ENCODE measurements at regions of chr1 and their contacts with region 1.

Region 1: GRCh38 chr1:39653546-39654031 is 14.1 kb upstream of the HEYL start:
- DNase-seq: peak; percentile 41 to 75
- ATAC-seq: peak; percentile 82 to 86
- H3K4me3 ChIP-seq: no peak overlapping the region
- H3K27ac ChIP-seq: no peak overlapping the region
- H3K4me1 ChIP-seq: no peaks in the 10 kb centered on the region
- CTCF ChIP-seq: peak; percentile 74
- EP300 ChIP-seq: no peak
- POLR2A ChIP-seq: no peak
- RAD21 ChIP-seq: peak; percentile 73 to 79

Region 2: DNA sequence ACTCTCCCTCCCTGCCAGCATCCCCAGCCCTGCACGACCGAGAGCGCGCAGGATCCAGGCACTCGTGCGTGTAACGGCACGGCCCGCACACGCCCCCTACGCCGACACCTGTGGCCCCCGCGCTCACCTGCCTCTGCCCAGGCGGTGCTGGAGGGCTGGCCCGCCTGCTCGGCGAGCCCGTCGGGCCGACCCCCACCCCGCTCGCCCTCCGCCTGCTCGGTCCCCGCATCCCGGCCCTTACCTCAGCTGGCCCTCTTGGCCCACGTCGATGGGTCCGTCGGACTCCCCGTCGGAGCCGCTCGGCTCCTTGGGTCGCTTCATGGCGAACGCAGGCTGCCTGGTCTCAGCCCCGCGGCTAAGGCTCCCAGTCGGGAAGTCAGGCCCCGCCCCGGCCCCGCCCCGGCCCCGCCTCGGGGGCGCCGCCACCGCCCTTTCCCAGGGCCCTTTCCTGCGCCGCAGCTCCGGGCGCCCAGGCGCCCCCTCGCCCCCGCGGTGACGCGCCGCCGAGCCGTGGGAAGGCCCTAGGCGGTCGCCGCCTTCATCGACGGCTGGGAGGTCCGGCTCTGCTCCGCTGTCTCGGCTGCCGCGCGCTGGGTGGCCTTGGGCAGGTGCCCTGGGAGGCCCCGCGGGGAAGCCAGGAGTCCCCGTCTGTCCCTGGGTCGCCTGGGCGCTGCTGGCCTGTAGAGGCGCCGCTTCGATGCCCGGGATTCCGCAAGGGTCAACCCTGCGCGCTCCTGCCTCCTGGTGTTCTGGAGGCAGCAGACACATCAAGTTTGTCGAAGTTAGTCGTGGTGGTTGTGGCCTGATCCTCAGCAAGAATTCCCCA is 14.1 kb before region 1 on chr1 and contains the start of gene HEYL:
- CTCF ChIA-PET with region 1: interaction called, 20 read pairs
- POLR2A ChIA-PET with region 1: no interaction called
- DNase-seq: peak; percentile 86
- ATAC-seq: peak; percentile 96
- H3K4me3 ChIP-seq: peak within 1 kb of the TSS; percentile 56
- H3K27ac ChIP-seq: peak within 1 kb of the TSS; percentile 80 to 95
- H3K4me1 ChIP-seq: no peaks in the 10 kb centered on the region
- CTCF ChIP-seq: peak; percentile 57
- EP300 ChIP-seq: no peak
- POLR2A ChIP-seq: peak; percentile 69
- RAD21 ChIP-seq: peak in 1 of 2 experiments; percentile 27; a peak in 1 of 5 replicates
- polyA plus RNA-seq, gene HEYL: 2.2 and 2.9 TPM in 2 replicates

Region 3: GRCh38 chr1:39672551-39672947 is 19.0 kb after region 1 on chr1:
- CTCF ChIA-PET with region 1: interaction called, 143 read pairs
- POLR2A ChIA-PET with region 1: no interaction called
- DNase-seq: peak in 1 of 2 experiments; percentile 14
- ATAC-seq: peak in 1 of 2 experiments; percentile 64; a peak in 3 of 6 replicates
- H3K4me3 ChIP-seq: peak overlapping the region; percentile 42; the same call in 1 of the 3 replicates
- H3K27ac ChIP-seq: no peak overlapping the region
- H3K4me1 ChIP-seq: peaks cover 7% of the 10 kb centered on the region; the same call in 1 of the 3 replicates
- CTCF ChIP-seq: no peak; the same call in 2 of the 3 replicates
- EP300 ChIP-seq: no peak
- POLR2A ChIP-seq: no peak
- RAD21 ChIP-seq: no peak

Measured in A549 (cell line).